ENCODE measurements at regions of chr10 and their contacts with region 1.

Region 1: DNA sequence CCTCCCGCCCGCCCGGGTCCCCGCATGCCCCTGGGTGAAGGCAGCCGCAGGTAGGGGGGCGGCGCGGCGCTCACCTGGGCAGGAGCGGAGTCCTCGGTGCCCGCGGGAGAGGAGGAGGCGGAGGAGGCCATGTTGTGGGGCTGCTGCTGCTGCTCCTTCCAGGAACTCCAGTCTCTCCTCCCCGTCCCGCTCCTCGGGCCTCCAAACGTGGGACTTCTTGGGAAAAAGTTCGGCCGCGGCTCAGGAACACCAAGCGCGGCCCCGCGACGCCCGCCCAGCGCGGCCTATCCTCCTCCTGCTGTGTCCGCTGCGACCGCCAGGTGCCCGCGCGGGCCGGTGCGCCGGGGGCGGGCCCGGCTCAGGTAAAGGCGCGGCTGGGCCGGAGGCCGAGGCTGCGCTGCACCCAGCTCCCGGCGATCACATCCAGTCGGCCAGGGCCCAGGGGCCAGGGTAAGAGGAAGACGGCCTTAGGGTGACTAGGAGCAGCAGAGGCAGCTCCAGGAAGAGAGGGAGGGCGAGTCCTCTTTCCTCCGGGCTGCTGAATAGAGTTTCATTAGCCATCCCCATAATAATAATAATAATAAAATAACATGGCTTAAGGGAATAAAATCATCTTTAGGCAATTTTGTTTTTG is 45.0 kb upstream of the CDK1 start:
- DNase-seq: peak; percentile 25 to 79 (median 50)
- ATAC-seq: peak; percentile 66
- H3K4me3 ChIP-seq: peak overlapping the region; percentile 70
- H3K4me3 Mint-ChIP-seq: peak overlapping the region; percentile 82
- H3K27ac ChIP-seq: peak overlapping the region; percentile 49 to 83
- H3K27ac Mint-ChIP-seq: peak overlapping the region; percentile 99
- H3K4me1 ChIP-seq: peaks cover 20% of the 10 kb centered on the region
- H3K4me1 Mint-ChIP-seq: peaks cover 49% of the 10 kb centered on the region
- H3K27me3 ChIP-seq: no peaks in the 10 kb centered on the region
- H3K27me3 Mint-ChIP-seq: no peaks in the 10 kb centered on the region
- CTCF ChIP-seq: peak; percentile 57

Region 2: GRCh38 chr10:60662917-60663614 is 70.2 kb before region 1 on chr10:
- CTCF ChIA-PET with region 1: no interaction called
- POLR2A ChIA-PET with region 1: interaction called, 3 read pairs
- intact Hi-C with region 1: loop called in 1 of 2 experiments (anchors 5 kb)
- DNase-seq: peak in 1 of 14 experiments; percentile 10
- ATAC-seq: no peak
- H3K4me3 ChIP-seq: no peak overlapping the region
- H3K4me3 Mint-ChIP-seq: peak overlapping the region; percentile 59
- H3K27ac ChIP-seq: no peak overlapping the region
- H3K27ac Mint-ChIP-seq: peak overlapping the region; percentile 48
- H3K4me1 ChIP-seq: peaks cover 12% of the 10 kb centered on the region
- H3K4me1 Mint-ChIP-seq: peaks cover 72% of the 10 kb centered on the region
- H3K27me3 ChIP-seq: no peaks in the 10 kb centered on the region
- H3K27me3 Mint-ChIP-seq: no peaks in the 10 kb centered on the region
- CTCF ChIP-seq: no peak

Region 3: GRCh38 chr10:60747817-60748469 is 14.6 kb after region 1 on chr10:
- CTCF ChIA-PET with region 1: no interaction called
- POLR2A ChIA-PET with region 1: no interaction called
- intact Hi-C with region 1: no loop called
- DNase-seq: no peak
- ATAC-seq: no peak
- H3K4me3 ChIP-seq: no peak overlapping the region
- H3K4me3 Mint-ChIP-seq: no peak overlapping the region
- H3K27ac ChIP-seq: no peak overlapping the region
- H3K27ac Mint-ChIP-seq: no peak overlapping the region
- H3K4me1 ChIP-seq: no peaks in the 10 kb centered on the region
- H3K4me1 Mint-ChIP-seq: no peaks in the 10 kb centered on the region
- H3K27me3 ChIP-seq: no peaks in the 10 kb centered on the region
- H3K27me3 Mint-ChIP-seq: no peaks in the 10 kb centered on the region
- CTCF ChIP-seq: no peak

Measured in CD4-positive, alpha-beta T cell (primary cell).